ENCODE measurements at regions of chr12 and their contacts with region 1.

Region 1: GRCh38 chr12:53492830-53493611 is 6.2 kb downstream of the MAP3K12 start:
- DNase-seq: peak; percentile 87 to 97
- H3K4me3 ChIP-seq: peak overlapping the region; percentile 57 to 72
- H3K27ac ChIP-seq: peak overlapping the region; percentile 86 to 88
- H3K4me1 ChIP-seq: peaks cover 3 to 15% of the 10 kb centered on the region in 2 donors
- H3K27me3 ChIP-seq: no peaks in the 10 kb centered on the region
- CTCF ChIP-seq: no peak

Region 2: DNA sequence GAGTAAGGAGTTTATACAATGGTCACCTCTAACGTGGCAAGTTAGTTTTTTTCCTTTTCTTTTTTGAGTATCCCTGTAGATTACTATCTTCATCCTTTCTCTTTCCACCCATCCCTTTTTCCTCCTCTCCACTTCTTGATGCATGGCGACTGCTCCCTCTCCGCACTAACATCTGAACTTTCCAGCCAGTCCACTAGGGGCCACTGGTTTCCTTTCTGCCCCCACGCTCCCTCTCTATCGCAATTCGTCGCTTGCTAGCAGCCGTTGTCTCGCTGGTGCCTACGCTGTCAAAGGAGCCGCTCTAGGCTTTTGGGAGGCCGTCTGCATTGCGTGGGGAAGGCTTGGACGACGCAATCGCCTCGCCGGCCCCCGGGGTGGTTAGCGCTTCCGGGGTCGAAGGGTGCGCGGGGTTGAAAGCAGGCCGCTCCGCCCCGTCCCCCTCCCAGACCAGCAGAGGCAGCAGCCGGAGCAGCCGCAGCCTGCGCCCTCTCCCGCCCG is 41.3 kb before region 1 on chr12 and contains the start of gene PCBP2:
- intact Hi-C with region 1: loop called (anchors 2 kb)
- DNase-seq: peak; percentile 95 to 99
- H3K4me3 ChIP-seq: peak within 1 kb of the TSS; percentile 74 to 91
- H3K27ac ChIP-seq: peak within 1 kb of the TSS; percentile 91 to 97
- H3K4me1 ChIP-seq: peaks cover 10 to 13% of the 10 kb centered on the region in 2 donors
- H3K27me3 ChIP-seq: no peaks in the 10 kb centered on the region
- CTCF ChIP-seq: peak; percentile 87 to 95 (median 89)
- total RNA-seq, gene PCBP2: 354 TPM